ENCODE measurements at regions of chr2 and their contacts with region 1.

Region 1: GRCh38 chr2:63614983-63615945 is 26.5 kb downstream of the MDH1 start:
- DNase-seq: no peak
- ATAC-seq: peak in 1 of 4 donors; percentile 42
- H3K4me3 ChIP-seq: no peak overlapping the region
- H3K27ac ChIP-seq: no peak overlapping the region
- H3K4me1 ChIP-seq: peaks cover 0 to 7% (median 0%) of the 10 kb centered on the region in 12 donors
- H3K27me3 ChIP-seq: no peaks in the 10 kb centered on the region
- CTCF ChIP-seq: no peak
- POLR2A ChIP-seq: no peak

Region 2: DNA sequence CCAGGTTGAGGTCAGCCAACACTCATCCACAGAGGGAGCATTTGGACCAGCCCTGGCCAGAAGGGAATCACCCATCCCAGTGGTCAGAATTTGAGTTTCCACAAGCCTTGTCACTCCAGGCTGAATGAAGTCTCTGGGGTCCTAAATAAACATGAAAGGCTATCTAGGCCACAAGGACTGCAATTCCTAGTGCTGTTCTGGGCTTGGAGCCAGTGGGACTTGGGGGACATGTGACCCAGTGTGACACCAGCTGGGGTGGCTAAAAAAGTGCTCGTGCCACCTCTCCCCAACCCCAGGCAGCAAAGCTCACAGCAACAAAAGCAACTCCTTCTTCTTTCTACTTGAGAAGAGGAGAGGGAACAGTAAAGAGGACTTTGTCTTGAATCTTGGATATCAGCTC is 65.2 kb after region 1 on chr2:
- intact Hi-C with region 1: loop called in 1 of 10 experiments (anchors 5 kb)
- DNase-seq: peak in 4 of 5 donors; percentile 32 to 61 (median 42)
- ATAC-seq: peak; percentile 49 to 83 (median 81)
- H3K4me3 ChIP-seq: no peak overlapping the region
- H3K27ac ChIP-seq: no peak overlapping the region
- H3K4me1 ChIP-seq: peaks cover 0 to 19% (median 6%) of the 10 kb centered on the region in 12 donors
- H3K27me3 ChIP-seq: no peaks in the 10 kb centered on the region
- CTCF ChIP-seq: no peak
- POLR2A ChIP-seq: no peak